A673 (cell line): ENCODE measurements at regions of chr5 and their contacts with region 1.

Region 1: DNA sequence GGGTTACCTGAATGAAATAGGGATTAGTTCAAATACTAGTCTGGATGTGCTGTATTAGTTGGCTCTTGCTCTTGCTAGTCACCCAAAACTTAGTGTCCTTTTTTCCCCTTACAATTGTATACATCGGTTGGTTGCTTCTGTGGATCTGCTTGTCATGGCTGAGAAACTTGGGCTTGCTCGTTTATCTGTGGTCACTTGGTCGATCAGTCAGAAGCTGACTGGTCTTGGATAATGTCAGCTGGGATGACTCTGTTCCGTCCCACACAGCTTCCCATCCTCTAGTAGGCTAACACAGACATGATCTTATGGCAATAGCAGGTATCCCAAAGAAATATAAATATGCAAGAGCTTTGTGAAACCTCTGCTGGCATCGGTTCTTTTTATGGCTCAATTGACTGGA is 807.4 kb downstream of the MAT2B start:
- DNase-seq: no peak
- H3K4me3 ChIP-seq: no peak overlapping the region
- H3K27ac ChIP-seq: no peak overlapping the region
- H3K4me1 ChIP-seq: no peaks in the 10 kb centered on the region
- H3K27me3 ChIP-seq: peaks cover 7% of the 10 kb centered on the region
- CTCF ChIP-seq: no peak

Region 2: DNA sequence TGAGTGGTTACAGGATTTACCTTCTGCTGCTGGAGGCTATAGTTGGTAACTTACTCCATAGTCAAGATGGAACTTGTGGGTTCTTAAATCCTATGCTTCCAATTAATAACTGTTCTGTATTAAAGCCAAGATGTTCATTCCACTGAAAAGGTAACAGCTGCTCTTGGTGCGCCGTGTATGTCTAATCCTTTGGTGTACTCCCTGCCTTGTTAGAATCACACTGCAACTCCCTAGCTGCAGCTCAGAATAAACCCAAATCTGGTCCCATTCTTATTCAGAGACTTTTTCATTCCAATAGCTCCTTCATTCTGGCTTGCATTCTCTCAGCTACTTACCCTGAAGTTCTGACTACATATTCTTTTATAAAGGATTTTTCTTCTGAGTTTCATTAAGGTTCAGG is 548.1 kb after region 1 on chr5:
- CTCF ChIA-PET with region 1: no interaction called
- POLR2A ChIA-PET with region 1: interaction called, 11 read pairs
- intact Hi-C with region 1: no loop called
- DNase-seq: no peak
- H3K4me3 ChIP-seq: no peak overlapping the region
- H3K27ac ChIP-seq: no peak overlapping the region
- H3K4me1 ChIP-seq: no peaks in the 10 kb centered on the region
- H3K27me3 ChIP-seq: no peaks in the 10 kb centered on the region
- CTCF ChIP-seq: no peak